ENCODE measurements at regions of chr19 and their contacts with region 1.

Region 1: DNA sequence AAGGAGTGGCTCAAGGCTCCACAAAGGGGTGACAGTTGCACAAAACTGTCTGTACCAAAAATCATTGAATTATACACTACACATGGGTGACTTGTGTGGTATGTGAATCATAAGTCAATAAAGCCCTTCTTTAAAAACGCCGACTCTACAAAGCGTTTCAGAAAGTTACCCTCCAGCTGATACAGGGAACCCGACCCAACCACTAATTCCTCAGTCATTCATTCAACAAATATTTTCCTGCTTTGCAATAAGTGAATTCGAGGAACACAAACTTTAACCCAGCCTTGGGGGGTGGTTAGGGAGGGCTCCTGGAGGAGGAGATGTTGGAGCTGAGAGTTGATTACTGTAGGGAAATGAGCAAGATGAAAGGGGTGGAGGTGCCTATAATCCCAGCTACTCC is 32.0 kb downstream of the LTBP4 start:
- H3K4me3 Mint-ChIP-seq: no peak overlapping the region
- H3K27ac Mint-ChIP-seq: no peak overlapping the region
- H3K4me1 Mint-ChIP-seq: peaks cover 6% of the 10 kb centered on the region
- H3K27me3 Mint-ChIP-seq: peaks cover 34% of the 10 kb centered on the region

Region 2: DNA sequence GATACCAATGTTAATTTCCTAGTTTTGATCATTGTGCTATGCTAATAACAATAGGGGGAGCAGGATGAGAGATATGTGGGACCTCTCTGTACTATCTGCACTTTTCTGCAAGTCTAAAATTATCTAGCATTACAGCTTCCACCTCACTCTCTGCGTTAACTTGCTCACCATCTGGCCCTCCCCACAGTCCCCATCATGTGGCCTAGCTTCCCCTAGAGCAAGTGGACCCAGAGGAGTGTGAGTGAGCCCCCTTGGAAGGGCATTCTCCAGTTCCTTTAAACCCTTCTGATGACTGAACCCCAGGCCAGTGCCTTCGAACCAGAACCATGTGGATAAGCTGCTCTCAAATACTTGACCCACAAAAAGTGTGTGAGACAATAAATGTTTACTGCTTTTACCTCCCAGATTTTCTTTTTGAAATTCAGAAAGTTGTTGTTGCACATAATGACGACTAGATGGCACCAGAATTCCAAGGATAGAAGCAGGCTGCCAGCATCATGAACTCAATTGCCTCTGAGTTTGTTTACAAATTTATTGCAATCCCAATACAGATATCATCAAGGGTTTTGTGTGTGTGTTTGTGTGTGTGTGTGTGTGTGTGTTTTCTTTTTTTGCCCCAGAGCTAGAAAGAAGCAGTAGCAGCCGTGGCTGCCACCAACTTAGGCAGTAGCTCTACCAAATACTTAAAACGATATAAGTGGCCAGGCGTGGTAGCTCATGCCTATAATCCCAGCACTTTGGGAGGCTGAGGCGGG is 493.5 kb before region 1 on chr19:
- intact Hi-C with region 1: loop called (anchors 10 kb)
- H3K4me3 Mint-ChIP-seq: no peak overlapping the region
- H3K27ac Mint-ChIP-seq: no peak overlapping the region
- H3K4me1 Mint-ChIP-seq: peaks cover 7% of the 10 kb centered on the region
- H3K27me3 Mint-ChIP-seq: peaks cover 18% of the 10 kb centered on the region

Region 3: DNA sequence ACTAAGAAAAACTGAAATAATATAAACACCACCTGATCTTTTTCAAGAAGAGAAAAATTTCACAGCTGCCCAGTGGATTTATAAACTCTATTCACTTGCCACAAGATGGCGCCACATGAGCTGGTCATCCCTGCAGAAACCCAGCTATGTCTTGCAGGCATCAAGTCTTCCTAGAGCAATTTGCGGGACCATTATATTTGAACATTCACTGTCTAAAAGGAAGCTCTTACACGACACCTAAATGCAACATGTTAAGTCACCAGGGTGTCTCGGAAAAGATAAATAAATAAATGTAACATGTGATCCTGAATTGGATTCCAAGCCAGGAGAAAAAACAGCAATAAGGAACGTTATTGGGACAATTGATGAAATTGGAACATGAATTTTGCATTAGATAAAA is 327.8 kb before region 1 on chr19:
- intact Hi-C with region 1: loop called (anchors 10 kb)
- H3K4me3 Mint-ChIP-seq: no peak overlapping the region
- H3K27ac Mint-ChIP-seq: no peak overlapping the region
- H3K4me1 Mint-ChIP-seq: peaks cover 16% of the 10 kb centered on the region
- H3K27me3 Mint-ChIP-seq: no peaks in the 10 kb centered on the region

Region 4: DNA sequence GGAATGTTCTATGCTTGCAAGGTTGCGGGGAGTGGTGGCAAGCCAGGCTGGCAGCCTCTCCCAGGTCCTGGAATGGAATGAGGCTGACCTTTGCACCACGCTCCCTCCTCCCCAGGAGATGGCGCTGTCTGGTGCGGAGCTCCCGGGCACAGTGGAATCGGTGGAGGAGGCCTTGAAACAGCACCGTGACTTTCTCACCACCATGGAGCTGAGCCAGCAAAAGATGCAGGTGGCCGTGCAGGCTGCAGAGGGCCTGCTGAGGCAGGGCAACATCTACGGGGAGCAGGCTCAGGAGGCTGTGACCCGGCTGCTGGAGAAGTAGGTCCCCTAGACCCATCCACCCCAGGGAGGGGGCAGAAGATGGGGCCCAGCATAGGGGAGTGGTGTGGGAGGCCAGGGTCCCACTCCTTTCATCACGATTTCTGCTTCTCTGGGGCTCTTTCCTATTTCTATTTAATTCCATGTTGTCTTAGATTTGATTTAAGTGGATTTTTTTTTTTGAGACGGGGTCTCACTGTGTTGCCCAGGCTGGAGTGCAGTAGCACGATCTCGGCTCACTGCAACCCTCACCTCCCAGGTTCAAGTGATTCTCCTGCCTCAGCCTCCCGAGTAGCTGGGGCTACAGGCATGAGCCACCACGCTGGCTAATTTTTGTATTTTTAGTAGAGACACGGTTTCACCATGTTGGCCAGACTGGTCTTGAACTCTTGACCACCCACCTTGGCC is 109.7 kb before region 1 on chr19:
- intact Hi-C with region 1: loop called (anchors 5 kb)
- H3K4me3 Mint-ChIP-seq: no peak overlapping the region
- H3K27ac Mint-ChIP-seq: no peak overlapping the region
- H3K4me1 Mint-ChIP-seq: peaks cover 5% of the 10 kb centered on the region
- H3K27me3 Mint-ChIP-seq: peaks cover 59% of the 10 kb centered on the region

Region 5: DNA sequence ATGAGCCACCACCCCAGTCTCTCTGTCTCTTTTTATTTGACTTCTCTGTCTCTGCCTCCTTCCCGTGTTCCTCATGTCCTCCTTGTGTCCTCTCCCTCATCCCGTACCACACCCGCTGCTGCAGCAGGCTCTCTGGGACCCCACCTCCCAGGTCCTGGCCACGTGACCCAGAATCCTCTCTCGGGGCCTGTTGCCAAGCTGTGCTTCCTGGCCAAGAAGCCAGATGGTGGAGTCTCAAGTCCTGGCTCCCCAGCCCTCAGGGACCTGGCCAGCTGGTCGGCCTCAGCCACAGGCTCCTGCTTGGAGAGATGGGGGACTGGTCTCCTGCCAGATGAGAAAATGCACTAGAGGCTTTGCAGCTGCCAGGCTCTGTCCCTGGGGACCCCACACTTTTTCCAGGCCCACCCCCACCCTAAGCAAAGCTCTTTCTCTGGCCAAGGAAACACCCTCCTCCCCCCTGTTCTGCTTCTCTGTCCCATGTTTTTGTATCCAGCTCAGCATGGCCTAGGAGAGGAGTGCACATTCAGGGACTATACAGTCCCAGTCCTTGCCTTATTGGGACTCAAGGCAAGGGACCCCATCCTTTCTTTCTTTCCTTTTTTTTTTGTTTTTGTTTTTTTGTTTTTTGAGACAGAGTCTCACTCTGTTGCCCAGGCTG is 90.9 kb before region 1 on chr19:
- intact Hi-C with region 1: loop called (anchors 1 kb)
- H3K4me3 Mint-ChIP-seq: no peak overlapping the region
- H3K27ac Mint-ChIP-seq: no peak overlapping the region
- H3K4me1 Mint-ChIP-seq: no peaks in the 10 kb centered on the region
- H3K27me3 Mint-ChIP-seq: peaks cover 47% of the 10 kb centered on the region